ENCODE measurements at regions of chr17 and their contacts with region 1.

Region 1: GRCh38 chr17:35432176-35433074 is at the start of gene SLFN12:
- DNase-seq: peak in 4 of 5 donors; percentile 61 to 74 (median 68)
- ATAC-seq: peak; percentile 70 to 93 (median 89)
- H3K4me3 ChIP-seq: peak within 1 kb of the TSS; percentile 49 to 81 (median 68)
- H3K27ac ChIP-seq: peak within 1 kb of the TSS; percentile 86 to 97 (median 93)
- H3K4me1 ChIP-seq: peaks cover 0 to 42% (median 19%) of the 10 kb centered on the region in 12 donors
- H3K27me3 ChIP-seq: no peaks in the 10 kb centered on the region
- CTCF ChIP-seq: no peak
- POLR2A ChIP-seq: peak in 1 of 2 donors; percentile 51
- total RNA-seq, gene SLFN12: 3.3 to 10.0 (median 4.5) TPM

Region 2: GRCh38 chr17:35368081-35368830 is 64.2 kb before region 1 on chr17:
- intact Hi-C with region 1: loop called in 4 of 10 experiments (anchors 5 to 10 kb)
- DNase-seq: peak in 2 of 5 donors; percentile 22 to 31
- ATAC-seq: peak in 3 of 4 donors; percentile 59 to 91 (median 90)
- H3K4me3 ChIP-seq: no peak overlapping the region
- H3K27ac ChIP-seq: peak overlapping the region in 1 of 12 donors; percentile 53
- H3K4me1 ChIP-seq: peaks cover 0 to 57% (median 8%) of the 10 kb centered on the region in 12 donors
- H3K27me3 ChIP-seq: peaks cover 0 to 5% (median 0%) of the 10 kb centered on the region in 9 donors
- CTCF ChIP-seq: no peak
- POLR2A ChIP-seq: no peak

Region 3: DNA sequence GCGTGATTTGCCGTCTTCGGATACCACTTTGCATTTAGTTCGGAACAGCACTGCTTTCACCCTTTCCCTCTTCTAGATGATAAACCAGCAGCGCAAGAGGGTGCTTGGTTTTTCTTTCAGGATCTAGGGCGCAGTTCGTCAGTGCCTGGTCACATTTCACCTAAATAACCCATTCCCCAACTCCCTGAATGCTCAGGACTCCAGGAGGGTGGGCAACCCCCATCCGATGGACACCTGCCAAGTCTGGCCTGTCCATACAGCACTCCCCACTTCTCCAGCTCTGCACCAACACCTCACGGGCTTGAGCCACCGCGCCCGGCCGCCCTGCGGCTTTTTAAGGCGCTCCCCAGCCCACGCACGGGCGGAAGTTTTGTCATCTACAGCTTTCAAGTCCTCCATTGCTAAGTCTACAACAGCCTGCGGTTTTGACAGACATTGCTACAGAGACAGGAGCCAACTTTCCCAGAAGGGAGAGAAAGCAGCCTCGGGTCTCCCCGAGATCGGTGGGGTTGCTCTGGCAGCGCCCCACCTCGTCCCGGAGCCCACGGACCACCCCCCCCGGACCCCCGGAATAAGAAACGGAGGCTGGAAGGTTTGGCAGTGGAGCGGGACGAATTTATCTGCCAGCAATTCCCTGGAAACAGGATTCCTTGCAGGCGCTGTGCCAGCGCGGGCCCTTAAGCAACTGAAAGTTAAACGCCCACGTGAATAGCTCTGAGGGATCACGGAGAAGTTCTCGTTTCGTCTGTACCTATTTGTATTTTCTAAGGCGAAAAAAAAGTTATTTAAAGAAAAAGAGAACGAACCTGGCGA is 54.7 kb after region 1 on chr17:
- intact Hi-C with region 1: loop called in 2 of 10 experiments (anchors 5 to 10 kb)
- DNase-seq: peak; percentile 50 to 75 (median 61)
- ATAC-seq: peak in 3 of 4 donors; percentile 76 to 87 (median 85)
- H3K4me3 ChIP-seq: peak overlapping the region; percentile 38 to 77 (median 59)
- H3K27ac ChIP-seq: peak overlapping the region in 11 of 12 donors; percentile 4 to 61 (median 44)
- H3K4me1 ChIP-seq: peaks cover 0 to 24% (median 6%) of the 10 kb centered on the region in 12 donors
- H3K27me3 ChIP-seq: peaks cover 9 to 58% (median 41%) of the 10 kb centered on the region in 9 donors
- CTCF ChIP-seq: no peak
- POLR2A ChIP-seq: no peak

Region 4: DNA sequence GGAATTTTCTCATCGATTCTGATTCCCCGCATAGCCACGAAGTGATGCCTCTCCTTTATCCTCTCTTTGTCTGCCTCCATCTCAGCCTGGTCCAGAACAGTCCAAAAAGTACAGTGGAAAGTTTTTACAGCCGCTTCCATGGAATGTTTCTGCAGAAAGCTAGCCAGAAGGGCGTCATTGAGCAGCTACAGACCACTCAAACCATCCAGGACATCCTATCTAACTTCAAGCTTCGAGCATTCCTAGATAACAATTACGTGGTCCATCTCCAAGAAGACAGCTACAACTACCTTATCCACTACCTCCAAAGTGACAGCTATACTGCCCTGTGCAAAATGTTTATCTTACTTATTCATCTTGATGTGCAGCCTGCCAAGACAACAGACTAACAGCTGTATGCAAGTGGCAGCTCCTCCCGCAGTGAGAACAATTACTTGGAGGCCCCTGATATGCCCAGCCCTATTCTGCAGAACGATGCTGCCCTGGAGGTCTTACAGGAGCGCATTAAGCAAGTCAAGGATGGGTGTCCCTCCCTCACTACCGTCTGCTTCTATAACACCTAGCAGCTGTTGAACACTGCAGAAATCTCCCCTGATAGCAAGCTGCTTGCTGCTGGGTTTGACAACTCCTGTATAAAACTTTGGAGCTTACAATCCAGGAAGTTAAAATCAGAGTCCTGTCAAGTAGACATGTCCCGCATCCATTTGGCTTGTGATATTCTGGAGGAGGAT is 66.2 kb after region 1 on chr17:
- intact Hi-C with region 1: no loop called
- DNase-seq: no peak
- ATAC-seq: peak in 1 of 4 donors; percentile 43
- H3K4me3 ChIP-seq: peak overlapping the region in 7 of 12 donors; percentile 12 to 37 (median 20)
- H3K27ac ChIP-seq: no peak overlapping the region
- H3K4me1 ChIP-seq: peaks cover 0 to 30% (median 1%) of the 10 kb centered on the region in 12 donors
- H3K27me3 ChIP-seq: peaks cover 21 to 78% (median 55%) of the 10 kb centered on the region in 9 donors
- CTCF ChIP-seq: no peak
- POLR2A ChIP-seq: no peak